PC-3 (cell line): ENCODE measurements at regions of chr11 and their contacts with region 1.

Region 1: GRCh38 chr11:1628506-1629325 is 859 bp upstream of the KRTAP5-5 start:
- DNase-seq: peak; percentile 47
- ATAC-seq: peak; percentile 86
- H3K4me3 ChIP-seq: no peak overlapping the region
- H3K27ac ChIP-seq: no peak overlapping the region
- H3K4me1 ChIP-seq: no peaks in the 10 kb centered on the region
- H3K27me3 ChIP-seq: peaks cover 40% of the 10 kb centered on the region
- CTCF ChIP-seq: peak; percentile 88

Region 2: DNA sequence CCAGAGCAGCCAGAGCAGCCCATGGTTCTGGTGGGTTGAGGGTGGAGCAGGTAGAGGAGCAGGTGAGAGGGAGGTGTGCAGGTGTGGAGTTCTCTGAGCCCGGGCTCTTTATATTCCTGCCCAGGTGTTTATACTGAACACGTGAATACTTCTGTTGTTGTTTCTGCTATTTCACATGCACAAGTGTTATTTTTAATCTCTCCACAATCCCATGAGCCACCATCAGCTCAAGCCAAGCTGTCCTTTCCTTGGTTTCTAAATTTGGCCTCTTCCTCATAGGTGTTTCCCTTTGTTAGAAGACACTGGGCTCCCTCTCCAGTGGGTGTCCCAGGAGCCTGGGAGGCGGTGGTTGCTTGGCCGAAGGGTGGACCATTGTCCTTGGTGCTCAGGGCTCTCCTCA is 20.4 kb before region 1 on chr11 and contains the start of gene KRTAP5-3:
- CTCF ChIA-PET with region 1: no interaction called
- POLR2A ChIA-PET with region 1: interaction called, 26 read pairs
- intact Hi-C with region 1: no loop called
- DNase-seq: no peak
- ATAC-seq: no peak
- H3K4me3 ChIP-seq: no peak within 1 kb of the TSS
- H3K27ac ChIP-seq: no peak within 1 kb of the TSS
- H3K4me1 ChIP-seq: no peaks in the 10 kb centered on the region
- H3K27me3 ChIP-seq: peaks cover 20% of the 10 kb centered on the region
- CTCF ChIP-seq: no peak
- total RNA-seq, gene KRTAP5-3: not detected in 2 replicates

Region 3: GRCh38 chr11:2277008-2277346 is 648.3 kb after region 1 on chr11:
- CTCF ChIA-PET with region 1: interaction called, 17 read pairs
- POLR2A ChIA-PET with region 1: no interaction called
- intact Hi-C with region 1: no loop called
- DNase-seq: no peak
- ATAC-seq: no peak
- H3K4me3 ChIP-seq: no peak overlapping the region
- H3K27ac ChIP-seq: no peak overlapping the region
- H3K4me1 ChIP-seq: no peaks in the 10 kb centered on the region
- H3K27me3 ChIP-seq: peaks cover 15% of the 10 kb centered on the region
- CTCF ChIP-seq: no peak